ENCODE measurements at regions of chr6 and their contacts with region 1.

Region 1: DNA sequence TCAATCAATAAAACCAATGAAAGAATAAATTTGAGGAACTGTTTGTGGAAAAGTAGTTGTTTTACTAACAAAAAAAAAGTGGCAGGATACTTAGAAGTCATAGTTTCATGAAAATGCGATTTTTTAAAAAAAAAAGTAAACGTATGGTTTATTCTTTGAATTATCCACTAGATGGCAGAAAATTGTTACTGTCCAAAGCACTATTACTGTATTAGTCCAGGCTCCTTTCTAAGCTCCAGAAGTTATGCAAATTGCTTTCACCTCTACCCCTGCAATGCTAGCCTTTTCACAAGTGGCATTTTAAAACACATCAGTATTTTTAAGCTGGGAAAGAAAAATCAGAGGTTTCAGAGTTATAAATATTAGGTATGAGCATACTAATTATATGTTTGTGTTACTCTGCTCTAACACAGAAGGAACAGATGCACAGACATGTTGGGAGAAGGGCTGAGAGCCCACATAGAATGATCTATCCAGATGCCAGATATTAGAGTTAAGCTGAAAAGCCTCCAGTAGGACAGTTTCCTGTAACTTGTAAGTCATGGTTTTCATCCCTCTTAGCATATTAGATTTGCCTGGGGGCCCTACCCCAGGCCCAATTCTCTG is 63.9 kb downstream of the FHL5 start:
- DNase-seq: peak in 1 of 2 experiments; percentile 3
- H3K4me3 ChIP-seq: no peak overlapping the region
- H3K4me3 Mint-ChIP-seq: no peak overlapping the region
- H3K27ac Mint-ChIP-seq: no peak overlapping the region
- H3K4me1 ChIP-seq: peaks cover 3% of the 10 kb centered on the region; the same call in 1 of the 2 replicates
- H3K4me1 Mint-ChIP-seq: peaks cover 11% of the 10 kb centered on the region
- H3K27me3 ChIP-seq: no peaks in the 10 kb centered on the region
- H3K27me3 Mint-ChIP-seq: peaks cover 8% of the 10 kb centered on the region
- CTCF ChIP-seq: peak; percentile 19 to 31

Region 2: DNA sequence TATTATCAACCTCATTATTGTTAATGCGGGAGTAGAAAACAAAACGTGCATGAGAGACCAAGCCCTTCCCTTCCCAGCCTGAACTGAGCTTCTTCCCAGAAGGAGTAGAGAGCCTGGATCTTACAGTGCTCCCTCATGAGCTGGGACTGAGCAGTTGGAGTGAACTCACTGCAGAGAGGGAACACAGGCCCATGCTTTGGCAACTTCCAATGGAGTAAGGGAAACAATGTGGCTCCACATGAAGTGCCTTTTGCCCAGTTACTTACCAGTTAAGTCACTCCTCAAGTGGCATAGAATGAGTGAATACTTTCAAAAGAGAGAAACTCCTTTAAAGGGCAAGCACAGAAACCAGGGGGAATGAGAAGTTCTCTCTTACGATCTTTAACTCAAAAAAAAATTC is 51.5 kb before region 1 on chr6:
- CTCF ChIA-PET with region 1: no interaction called
- POLR2A ChIA-PET with region 1: no interaction called
- intact Hi-C with region 1: no loop called
- DNase-seq: no peak
- H3K4me3 ChIP-seq: no peak overlapping the region
- H3K4me3 Mint-ChIP-seq: no peak overlapping the region
- H3K27ac Mint-ChIP-seq: no peak overlapping the region
- H3K4me1 ChIP-seq: no peaks in the 10 kb centered on the region
- H3K4me1 Mint-ChIP-seq: peaks cover 7% of the 10 kb centered on the region
- H3K27me3 ChIP-seq: no peaks in the 10 kb centered on the region
- H3K27me3 Mint-ChIP-seq: no peaks in the 10 kb centered on the region
- CTCF ChIP-seq: no peak

Region 3: GRCh38 chr6:96657959-96658358 is 31.1 kb after region 1 on chr6:
- CTCF ChIA-PET with region 1: interaction called, 8 read pairs
- POLR2A ChIA-PET with region 1: no interaction called
- intact Hi-C with region 1: loop called (anchors 1 kb)
- DNase-seq: no peak
- H3K4me3 ChIP-seq: no peak overlapping the region
- H3K4me3 Mint-ChIP-seq: no peak overlapping the region
- H3K27ac Mint-ChIP-seq: no peak overlapping the region
- H3K4me1 ChIP-seq: 0 out of 2 replicates have a peak, but pooled peaks cover 3% of the 10 kb centered on the region
- H3K4me1 Mint-ChIP-seq: no peaks in the 10 kb centered on the region
- H3K27me3 ChIP-seq: no peaks in the 10 kb centered on the region
- H3K27me3 Mint-ChIP-seq: peaks cover 3% of the 10 kb centered on the region
- CTCF ChIP-seq: no peak

Region 4: DNA sequence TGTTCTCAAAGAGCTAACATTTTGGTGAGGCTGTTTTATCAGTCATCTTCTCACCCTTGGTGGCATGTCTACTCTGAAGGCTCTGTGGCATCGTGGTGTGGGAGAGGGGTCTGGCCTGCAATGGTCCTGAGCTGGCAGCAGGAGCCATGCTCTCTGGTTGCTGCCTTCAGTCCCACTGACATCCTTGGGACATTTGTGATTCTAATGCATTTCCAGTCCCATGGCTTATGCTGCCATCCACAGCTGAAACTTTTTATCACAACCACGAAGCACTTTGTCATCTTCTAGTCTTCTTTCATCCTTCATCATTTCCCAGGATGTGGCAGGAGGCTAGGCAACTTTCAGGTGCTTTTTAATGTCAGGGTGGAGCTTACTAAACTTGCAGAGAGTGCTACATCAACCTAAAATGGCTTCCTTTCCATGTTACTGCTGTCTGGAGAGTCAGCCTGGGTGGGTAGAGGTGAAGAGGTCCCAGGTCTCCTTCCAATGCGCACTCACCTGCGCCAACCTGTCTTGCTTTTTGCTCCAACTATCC is 133.4 kb after region 1 on chr6:
- CTCF ChIA-PET with region 1: no interaction called
- POLR2A ChIA-PET with region 1: no interaction called
- intact Hi-C with region 1: loop called (anchors 1 kb)
- DNase-seq: no peak
- H3K4me3 ChIP-seq: no peak overlapping the region
- H3K4me3 Mint-ChIP-seq: no peak overlapping the region
- H3K27ac Mint-ChIP-seq: no peak overlapping the region
- H3K4me1 ChIP-seq: no peaks in the 10 kb centered on the region
- H3K4me1 Mint-ChIP-seq: no peaks in the 10 kb centered on the region
- H3K27me3 ChIP-seq: no peaks in the 10 kb centered on the region
- H3K27me3 Mint-ChIP-seq: peaks cover 11% of the 10 kb centered on the region
- CTCF ChIP-seq: no peak

Region 5: GRCh38 chr6:97053643-97054411 is 427.0 kb after region 1 on chr6:
- CTCF ChIA-PET with region 1: no interaction called
- POLR2A ChIA-PET with region 1: no interaction called
- intact Hi-C with region 1: loop called (anchors 1 kb)
- DNase-seq: no peak
- H3K4me3 ChIP-seq: no peak overlapping the region
- H3K4me3 Mint-ChIP-seq: no peak overlapping the region
- H3K27ac Mint-ChIP-seq: no peak overlapping the region
- H3K4me1 ChIP-seq: no peaks in the 10 kb centered on the region
- H3K4me1 Mint-ChIP-seq: no peaks in the 10 kb centered on the region
- H3K27me3 ChIP-seq: no peaks in the 10 kb centered on the region
- H3K27me3 Mint-ChIP-seq: peaks cover 13% of the 10 kb centered on the region
- CTCF ChIP-seq: peak; percentile 40 to 48

Region 6: GRCh38 chr6:97059473-97059872 is 432.6 kb after region 1 on chr6:
- CTCF ChIA-PET with region 1: interaction called, 9 read pairs
- POLR2A ChIA-PET with region 1: no interaction called
- intact Hi-C with region 1: loop called (anchors 1 kb)
- DNase-seq: peak in 1 of 2 experiments; percentile 8
- H3K4me3 ChIP-seq: no peak overlapping the region
- H3K4me3 Mint-ChIP-seq: no peak overlapping the region
- H3K27ac Mint-ChIP-seq: no peak overlapping the region
- H3K4me1 ChIP-seq: no peaks in the 10 kb centered on the region; the same call in 1 of the 2 replicates
- H3K4me1 Mint-ChIP-seq: peaks cover 14% of the 10 kb centered on the region
- H3K27me3 ChIP-seq: no peaks in the 10 kb centered on the region
- H3K27me3 Mint-ChIP-seq: peaks cover 11% of the 10 kb centered on the region
- CTCF ChIP-seq: peak; percentile 40 to 43

Region 7: GRCh38 chr6:97401533-97401932 is 774.7 kb after region 1 on chr6:
- CTCF ChIA-PET with region 1: no interaction called
- POLR2A ChIA-PET with region 1: no interaction called
- intact Hi-C with region 1: no loop called
- DNase-seq: no peak
- H3K4me3 ChIP-seq: no peak overlapping the region
- H3K4me3 Mint-ChIP-seq: no peak overlapping the region
- H3K27ac Mint-ChIP-seq: no peak overlapping the region
- H3K4me1 ChIP-seq: 0 out of 2 replicates have a peak, but pooled peaks cover 3% of the 10 kb centered on the region
- H3K4me1 Mint-ChIP-seq: peaks cover 7% of the 10 kb centered on the region
- H3K27me3 ChIP-seq: no peaks in the 10 kb centered on the region
- H3K27me3 Mint-ChIP-seq: no peaks in the 10 kb centered on the region
- CTCF ChIP-seq: no peak

Measured in Caco-2 (cell line).